Cardiac septum (tissue), 1 donor: ENCODE measurements at regions of chr9 and their contacts with region 1.

Region 1: GRCh38 chr9:38362852-38363593 is 29.5 kb upstream of the ALDH1B1 start:
- DNase-seq: peak; percentile 44

Region 2: DNA sequence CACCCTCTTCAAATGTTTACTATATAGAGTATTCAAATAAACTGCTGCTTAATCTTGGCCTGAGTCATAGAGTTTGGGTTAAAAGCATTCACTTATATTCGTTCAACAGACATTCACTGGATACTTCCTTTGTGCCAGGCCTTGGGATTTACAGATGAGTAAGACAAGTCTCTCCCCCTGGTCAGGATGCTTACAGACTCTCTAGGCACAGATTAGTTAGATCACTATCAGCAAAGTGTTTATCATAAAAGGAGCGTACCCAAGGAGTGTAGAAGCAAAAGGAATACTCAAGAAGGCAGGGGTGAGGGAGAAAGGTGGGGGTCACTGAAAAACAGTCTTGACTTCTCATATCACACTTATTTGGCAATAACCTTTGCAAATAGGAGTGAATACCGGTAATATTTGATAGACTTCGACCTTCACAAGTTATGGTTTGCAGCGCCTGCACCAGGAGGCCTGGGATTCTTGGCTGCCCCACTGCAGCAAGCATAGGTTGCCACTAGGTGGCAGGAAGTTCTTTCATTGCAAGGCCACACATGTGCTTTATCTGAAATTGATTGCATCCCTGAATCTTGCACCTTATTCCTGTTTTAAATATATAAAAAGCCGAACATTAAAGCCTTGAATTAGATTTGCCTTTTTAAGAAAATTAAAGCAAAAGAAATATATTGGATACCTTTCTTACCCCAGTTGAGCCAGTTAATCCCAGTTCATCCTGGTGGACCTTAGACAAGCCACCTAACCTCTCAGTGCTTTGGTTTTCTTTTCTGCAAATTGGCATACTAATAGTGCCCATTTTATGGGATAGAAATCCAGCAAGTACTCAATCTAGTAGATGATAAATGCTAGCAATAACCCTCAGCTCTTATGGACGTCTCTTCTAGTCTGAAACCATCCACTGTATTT is 615.9 kb before region 1 on chr9:
- intact Hi-C with region 1: loop called (anchors 5 kb)
- DNase-seq: no peak

Region 3: DNA sequence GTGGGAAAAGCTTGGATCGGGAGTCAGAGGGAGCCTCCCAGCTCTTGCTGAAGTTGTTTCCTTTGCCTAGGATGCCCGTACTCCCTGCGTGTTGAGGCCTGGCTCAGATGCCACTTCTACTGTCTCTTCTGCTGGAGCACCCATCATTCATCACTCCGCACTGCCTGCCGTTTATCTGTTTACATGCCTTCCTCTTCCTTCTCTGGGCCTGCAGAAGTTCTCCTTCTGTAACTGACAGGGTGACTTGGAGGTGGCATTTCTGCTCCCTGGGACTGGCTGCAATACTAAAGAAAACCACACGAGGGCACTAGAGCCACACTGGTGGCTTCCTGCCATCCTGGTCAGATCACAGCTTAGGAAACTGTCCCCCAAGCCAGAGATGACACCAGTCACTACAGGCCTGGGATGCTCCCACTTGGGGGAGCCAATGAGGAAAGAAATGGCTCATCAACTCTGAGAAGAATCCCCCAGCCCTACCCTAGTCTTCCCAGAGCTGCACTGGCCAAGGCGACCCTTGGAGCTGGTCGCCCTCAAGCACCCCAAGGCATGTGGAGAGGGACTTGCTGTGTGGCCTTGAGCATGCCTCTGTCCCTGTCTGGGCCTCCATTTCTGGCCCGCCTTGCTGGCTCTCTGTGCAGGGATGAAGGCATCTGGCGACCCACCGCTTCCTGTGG is 449.4 kb before region 1 on chr9:
- intact Hi-C with region 1: loop called (anchors 5 kb)
- DNase-seq: peak; percentile 87

Region 4: DNA sequence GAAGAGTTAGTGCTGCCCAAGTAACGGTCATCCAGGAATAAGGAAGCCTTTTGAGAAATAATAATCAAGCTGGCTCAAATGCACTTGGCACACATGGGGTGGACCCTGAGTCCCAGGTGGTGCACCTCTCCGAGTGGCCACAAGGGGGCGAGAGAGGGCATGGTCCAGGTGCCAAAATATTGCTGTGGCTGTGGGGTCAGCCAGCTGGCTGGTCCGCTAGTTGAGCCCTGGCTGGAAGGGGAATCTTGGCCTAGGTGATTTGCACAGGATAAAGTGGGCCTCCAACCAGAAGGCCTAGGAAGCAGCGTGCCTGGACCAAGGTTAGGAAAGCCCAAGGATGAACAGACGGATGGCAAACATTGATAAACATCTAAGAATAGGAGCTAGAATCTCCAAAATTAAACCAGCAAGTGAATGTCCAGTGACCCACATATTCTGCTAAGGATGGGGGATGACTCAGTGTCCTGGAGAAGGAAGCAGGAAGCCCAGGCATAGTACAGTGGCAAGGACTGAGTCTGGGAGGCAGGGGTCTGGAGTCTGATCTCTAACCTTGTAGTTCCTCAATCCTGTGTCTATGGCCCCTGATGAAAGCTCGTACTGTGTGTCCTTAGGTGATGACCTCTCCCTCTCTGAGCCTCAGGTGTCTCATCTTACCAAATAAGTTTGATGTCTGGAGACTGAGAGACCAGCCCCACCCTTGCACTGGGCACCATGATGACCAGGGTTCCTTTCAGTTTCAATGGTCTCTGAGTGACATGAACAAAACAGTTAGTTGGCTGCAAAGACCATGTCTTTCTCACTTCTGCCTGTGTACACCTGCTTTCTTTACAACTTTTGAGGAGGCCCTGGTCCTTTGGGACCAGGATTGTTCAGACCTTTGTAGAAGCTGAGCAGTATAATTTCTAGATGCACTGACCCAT is 274.8 kb before region 1 on chr9:
- intact Hi-C with region 1: loop called (anchors 5 kb)
- DNase-seq: peak; percentile 89

Region 5: DNA sequence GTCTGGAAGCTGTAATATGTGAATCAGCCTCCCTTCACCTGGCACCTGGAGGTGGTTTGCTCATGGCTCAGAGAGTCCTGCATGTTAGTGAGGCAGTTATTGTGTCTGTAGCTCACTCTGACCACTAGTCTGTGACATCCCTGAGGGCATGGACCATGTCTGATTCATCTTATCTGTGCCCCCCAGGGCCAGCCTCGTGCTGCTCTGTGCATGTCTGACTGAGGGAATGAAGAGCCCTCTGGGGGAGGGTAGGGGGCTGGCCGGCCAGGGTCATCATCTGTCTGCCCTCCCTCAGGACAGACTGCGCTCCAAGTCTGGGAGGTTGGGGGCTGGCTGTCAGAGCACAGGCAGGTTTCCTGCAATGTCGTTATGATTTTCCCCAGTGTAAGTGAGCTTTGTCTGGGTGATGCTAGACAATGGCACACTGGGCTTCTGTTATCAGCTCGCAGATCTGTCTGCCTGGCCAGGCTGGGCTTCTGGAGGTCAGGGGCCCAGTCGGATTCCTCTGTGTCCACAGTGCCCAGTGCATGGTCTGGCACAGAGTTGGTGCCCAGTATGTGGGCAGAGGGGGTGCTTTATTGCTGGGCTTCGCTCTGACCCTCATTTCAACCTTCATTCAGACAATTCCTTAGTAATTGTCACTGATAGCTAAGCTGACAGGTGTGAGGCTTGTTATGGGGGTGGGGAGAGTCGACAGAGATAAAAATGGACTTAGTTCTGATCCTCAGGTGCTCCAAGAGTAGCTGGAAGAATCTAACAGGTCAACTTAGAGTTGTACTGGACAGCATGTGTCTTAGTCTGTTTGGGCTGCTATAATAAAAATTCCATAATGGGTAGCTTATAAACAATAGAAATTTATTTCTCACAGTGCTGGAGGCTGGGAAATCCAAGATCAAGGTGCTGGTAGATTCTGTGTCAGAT is 208.3 kb before region 1 on chr9:
- intact Hi-C with region 1: loop called (anchors 5 kb)
- DNase-seq: no peak

Region 6: DNA sequence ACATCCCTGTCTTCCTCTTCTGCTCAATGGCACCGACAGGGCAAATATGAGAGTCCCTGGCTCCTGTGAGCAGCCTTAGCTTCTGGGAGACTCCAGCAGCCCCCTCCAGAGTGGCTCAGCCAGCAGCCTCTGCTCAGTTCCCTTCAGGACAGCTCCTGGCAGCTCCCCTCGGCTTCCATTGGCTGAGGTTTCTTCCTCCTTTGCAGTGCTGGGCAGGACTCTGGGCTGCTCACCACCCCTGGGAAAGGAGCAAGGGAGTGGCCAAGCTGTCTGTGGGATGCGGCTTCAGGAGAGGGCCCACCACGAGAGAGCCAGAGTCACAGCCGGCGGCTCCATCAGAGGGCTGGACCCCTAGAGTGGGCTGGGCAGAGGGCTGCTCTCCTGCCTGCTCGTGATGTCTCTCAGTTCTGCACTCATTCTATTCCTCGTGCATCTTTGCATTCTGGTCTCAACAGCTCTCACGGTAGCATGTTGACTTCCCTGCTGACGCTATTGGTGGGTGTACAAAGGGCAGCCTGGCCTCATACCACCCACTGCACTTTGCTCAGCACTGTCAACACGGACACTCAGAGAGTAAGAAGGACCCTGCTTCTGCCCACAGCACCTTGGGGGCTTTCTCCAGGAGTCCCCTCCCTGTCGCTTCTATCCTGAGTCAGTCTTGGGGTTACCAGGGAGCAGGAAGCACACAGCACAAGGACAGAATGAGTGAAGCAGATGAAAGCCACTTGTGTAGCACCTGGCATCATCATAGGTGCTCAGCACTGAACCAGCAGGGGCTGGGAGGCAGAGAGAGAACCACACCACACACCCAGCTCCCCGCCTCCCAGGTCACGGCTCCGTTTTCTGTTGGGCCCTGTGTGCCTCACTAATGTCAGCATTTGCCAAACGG is 51.4 kb before region 1 on chr9:
- intact Hi-C with region 1: loop called (anchors 5 kb)
- DNase-seq: no peak

Region 7: DNA sequence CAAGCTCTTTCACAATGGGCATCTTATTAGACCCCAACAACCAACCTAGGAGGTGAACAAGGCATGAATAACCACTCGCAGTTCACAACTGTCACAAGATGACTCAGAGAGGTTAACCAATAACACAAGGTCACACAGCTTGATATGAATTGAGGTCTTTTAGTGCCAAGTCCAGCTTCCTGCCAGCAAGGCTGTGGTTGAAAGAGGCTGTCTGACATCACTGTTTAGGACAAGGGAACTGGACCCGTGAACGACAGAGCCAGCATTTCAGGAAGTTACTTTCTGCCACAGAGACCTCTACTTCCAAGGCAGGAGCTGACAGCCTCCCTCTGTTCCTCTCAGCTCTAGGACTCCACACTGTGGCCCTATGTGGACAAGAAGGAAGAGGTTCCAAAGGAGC is 23.9 kb before region 1 on chr9:
- intact Hi-C with region 1: no loop called
- DNase-seq: no peak